Right lobe of liver (tissue), 6 donors: ENCODE measurements at regions of chrX and their contacts with region 1.

Region 1: GRCh38 chrX:68828740-68829552 is at the start of gene EFNB1:
- DNase-seq: peak; percentile 91 to 94 (median 92)
- ATAC-seq: peak; percentile 84 to 92 (median 91)
- H3K4me3 ChIP-seq: peak within 1 kb of the TSS; percentile 67 to 70 (median 69)
- H3K27ac ChIP-seq: peak within 1 kb of the TSS; percentile 44 to 81 (median 62)
- H3K4me1 ChIP-seq: no peaks in the 10 kb centered on the region
- H3K27me3 ChIP-seq: peaks cover 0 to 8% of the 10 kb centered on the region in 2 donors
- CTCF ChIP-seq: no peak
- POLR2A ChIP-seq: peak; percentile 98
- total RNA-seq, gene EFNB1: 6.1 to 17.4 (median 10.4) TPM

Region 2: DNA sequence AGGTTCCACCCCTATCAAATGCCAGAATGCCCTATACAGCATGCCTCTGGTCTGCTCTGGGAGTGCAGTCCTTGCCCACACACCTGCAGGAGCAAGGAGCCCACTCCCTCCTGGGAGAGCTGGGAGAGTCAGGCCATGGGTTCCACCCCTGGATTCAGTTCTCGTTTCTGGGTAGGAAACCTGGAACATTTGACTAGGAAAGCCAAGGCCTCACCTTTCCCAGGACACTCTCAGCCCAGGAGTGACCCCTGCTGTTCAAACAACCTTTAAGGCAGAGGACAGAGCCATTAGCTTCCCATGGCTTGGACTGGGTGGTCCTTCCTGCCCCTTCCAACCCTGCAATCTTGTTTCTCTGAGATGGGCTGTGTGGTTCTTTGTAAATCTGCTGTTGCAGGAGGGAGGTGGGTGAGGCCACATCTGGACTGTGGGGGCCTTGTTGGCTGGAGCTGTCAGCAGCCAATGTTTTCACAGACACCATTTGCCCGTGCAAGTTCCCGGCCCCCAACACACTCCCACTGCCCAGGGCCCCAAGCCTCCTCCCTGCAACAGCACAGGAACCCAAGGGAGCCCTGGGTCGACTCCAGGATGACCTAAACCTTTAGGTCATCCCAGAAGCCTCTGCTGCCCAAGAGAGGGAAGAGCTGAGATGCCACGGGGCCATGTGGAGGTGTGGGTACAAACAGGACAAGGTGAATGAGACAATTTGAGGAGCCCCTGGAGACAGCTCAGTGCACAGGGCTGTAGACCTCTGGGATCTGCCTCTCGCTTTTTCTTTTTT is 231.9 kb after region 1 on chrX:
- intact Hi-C with region 1: loop called (anchors 10 kb)
- DNase-seq: peak in 1 of 3 donors; percentile 47
- ATAC-seq: peak; percentile 74 to 89 (median 78)
- H3K4me3 ChIP-seq: no peak overlapping the region
- H3K27ac ChIP-seq: no peak overlapping the region
- H3K4me1 ChIP-seq: no peaks in the 10 kb centered on the region
- H3K27me3 ChIP-seq: no peaks in the 10 kb centered on the region
- CTCF ChIP-seq: peak; percentile 29 to 41 (median 32)
- POLR2A ChIP-seq: no peak

Region 3: DNA sequence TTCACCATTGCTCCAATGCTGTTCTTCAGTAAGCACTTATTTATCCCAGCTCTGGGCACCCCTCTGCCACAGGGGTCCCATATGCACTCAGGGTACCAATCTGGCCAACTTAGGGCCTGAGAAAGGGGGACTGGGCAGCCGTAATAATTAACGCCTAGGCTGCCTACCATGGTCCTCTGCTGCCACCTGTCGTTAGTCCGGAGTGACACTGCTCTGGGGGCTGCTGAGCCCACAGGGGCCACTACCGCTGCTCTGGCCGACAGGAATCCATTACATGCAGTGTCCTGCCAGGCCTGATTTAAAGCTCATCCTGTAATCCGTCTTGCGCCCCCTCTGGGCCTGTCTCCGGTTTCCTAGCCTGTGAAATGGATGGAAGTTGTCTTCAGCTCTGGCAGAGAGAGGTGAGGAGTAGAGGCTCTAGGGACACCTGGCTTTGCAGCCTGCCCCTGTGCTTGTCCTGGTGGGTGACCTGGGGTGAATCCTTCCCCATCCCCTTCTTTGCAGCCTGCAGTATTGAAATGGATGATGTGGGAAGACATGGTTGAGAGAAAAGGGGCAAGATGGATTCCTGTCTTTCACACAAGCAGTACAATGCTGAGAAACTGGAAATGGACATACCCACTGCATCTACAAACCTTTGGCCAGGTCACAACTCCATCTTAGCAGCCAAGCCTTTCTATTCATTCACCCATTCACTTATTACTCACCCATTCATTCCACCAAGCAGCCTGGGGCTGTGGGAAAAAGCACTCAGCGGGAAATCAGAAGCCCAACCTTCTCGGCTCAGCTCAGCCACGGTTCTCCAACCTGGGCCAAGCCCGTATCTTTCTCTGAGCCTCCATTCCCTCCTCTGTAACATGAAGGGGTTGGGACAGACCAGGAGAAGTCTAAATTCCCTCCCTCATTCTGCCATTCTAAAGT is 558.9 kb after region 1 on chrX:
- intact Hi-C with region 1: loop called (anchors 10 kb)
- DNase-seq: peak; percentile 45 to 62 (median 59)
- ATAC-seq: peak; percentile 66 to 82 (median 76)
- H3K4me3 ChIP-seq: no peak overlapping the region
- H3K27ac ChIP-seq: no peak overlapping the region
- H3K4me1 ChIP-seq: no peaks in the 10 kb centered on the region
- H3K27me3 ChIP-seq: no peaks in the 10 kb centered on the region
- CTCF ChIP-seq: peak; percentile 73 to 89 (median 84)
- POLR2A ChIP-seq: no peak